ENCODE measurements at regions of chr2 and their contacts with region 1.

Region 1: DNA sequence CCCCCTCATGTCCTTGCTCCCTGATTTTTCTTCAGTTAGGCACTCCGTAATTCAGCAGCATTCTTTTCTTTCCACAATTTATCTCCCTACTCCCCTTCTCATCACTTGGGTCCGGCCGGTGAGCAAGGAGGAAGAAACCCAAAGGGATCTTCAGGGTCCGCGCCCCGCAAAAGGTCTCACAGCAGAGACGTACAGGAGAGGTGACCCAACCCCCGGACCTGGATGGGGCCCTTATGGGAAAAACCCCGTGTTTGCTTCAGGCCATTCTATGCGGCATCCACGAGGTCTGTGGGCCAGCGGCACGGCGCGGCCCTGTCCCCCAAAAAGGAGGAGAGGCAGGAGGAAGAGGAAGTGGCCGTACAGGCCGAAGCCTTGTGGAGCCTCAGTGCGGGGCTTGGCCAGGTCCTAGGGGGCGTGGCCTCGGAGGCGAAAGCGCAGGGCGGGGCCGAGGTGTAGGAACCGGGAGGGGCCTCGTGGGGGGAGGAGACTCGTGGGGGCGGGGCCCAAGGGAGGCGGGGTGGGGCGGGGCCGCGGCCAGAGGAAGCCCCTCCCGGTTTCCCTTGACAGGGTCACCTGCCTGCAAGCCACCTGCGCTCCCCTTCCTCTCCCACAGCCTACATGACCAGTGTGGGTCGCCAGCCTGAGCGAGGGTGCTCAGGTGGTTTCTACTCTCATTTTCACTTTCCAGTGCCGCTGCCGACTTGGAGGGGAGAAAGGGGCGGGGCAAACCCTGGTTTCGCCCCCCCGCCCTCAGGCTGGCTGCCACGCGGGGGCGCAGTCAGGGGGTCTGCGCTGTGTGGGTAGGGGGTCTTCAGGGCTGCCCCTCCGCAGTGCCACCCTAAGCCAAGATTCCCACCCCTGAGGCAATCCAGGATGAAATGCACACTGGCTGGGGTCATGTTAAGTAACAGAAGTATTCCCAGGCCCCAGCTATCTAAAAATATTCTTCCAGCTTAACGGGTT is 156.4 kb upstream of the XPO1 start:
- DNase-seq: peak; percentile 95 to 98 (median 97)
- ATAC-seq: peak; percentile 99 to 100 (median 100)
- H3K4me3 ChIP-seq: peak overlapping the region; percentile 48 to 94 (median 82)
- H3K27ac ChIP-seq: peak overlapping the region; percentile 54 to 91 (median 84)
- H3K4me1 ChIP-seq: peaks cover 0 to 12% (median 5%) of the 10 kb centered on the region in 12 donors
- H3K27me3 ChIP-seq: no peaks in the 10 kb centered on the region
- CTCF ChIP-seq: peak; percentile 20 to 70 (median 50)
- POLR2A ChIP-seq: peak in 1 of 2 donors; percentile 65

Region 2: DNA sequence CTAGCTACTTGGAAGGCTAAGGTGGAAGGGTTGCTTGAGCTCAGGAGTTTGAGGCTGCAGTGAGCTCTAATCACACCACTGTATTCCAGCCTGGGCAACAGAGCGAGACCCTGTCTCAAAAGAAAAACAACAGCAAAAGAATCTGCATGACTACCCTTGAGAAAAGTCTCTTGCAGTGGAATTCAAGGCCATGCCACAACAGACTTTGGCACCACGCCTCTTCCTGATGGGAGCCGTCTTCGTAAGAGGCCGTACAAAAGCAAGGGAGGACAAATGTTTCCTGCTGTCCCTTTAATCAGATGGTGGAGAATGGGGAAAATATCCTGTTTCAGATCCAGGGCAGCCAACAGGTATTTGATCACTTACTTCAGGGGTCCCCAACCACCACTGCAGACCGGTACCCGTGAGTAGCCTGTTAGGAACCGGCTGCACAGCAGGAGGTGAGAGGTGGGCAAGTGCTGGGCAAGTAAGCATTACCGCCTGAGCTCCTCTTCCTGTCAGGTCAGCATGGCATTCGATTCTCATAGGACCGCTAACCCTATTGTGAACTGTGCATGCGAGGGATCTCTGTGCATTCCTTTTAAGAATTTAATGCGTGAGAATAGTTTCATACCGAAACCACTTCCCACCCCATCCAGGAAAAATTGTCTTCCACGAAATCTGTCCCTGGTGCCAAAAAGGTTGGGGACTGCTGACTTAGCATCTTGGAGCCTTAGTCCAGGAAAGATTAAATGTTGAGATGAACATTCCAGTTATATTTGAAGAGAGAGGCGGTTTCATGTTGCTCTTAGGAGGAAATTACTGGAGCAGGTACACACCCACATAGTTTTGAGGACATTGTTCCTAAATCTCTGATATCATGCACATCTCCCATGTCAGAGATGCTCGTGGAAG is 62.1 kb before region 1 on chr2:
- intact Hi-C with region 1: no loop called
- DNase-seq: no peak
- ATAC-seq: no peak
- H3K4me3 ChIP-seq: peak overlapping the region in 4 of 12 donors; percentile 14 to 25 (median 20)
- H3K27ac ChIP-seq: no peak overlapping the region
- H3K4me1 ChIP-seq: no peaks in the 10 kb centered on the region
- H3K27me3 ChIP-seq: no peaks in the 10 kb centered on the region
- CTCF ChIP-seq: no peak
- POLR2A ChIP-seq: no peak

Region 3: DNA sequence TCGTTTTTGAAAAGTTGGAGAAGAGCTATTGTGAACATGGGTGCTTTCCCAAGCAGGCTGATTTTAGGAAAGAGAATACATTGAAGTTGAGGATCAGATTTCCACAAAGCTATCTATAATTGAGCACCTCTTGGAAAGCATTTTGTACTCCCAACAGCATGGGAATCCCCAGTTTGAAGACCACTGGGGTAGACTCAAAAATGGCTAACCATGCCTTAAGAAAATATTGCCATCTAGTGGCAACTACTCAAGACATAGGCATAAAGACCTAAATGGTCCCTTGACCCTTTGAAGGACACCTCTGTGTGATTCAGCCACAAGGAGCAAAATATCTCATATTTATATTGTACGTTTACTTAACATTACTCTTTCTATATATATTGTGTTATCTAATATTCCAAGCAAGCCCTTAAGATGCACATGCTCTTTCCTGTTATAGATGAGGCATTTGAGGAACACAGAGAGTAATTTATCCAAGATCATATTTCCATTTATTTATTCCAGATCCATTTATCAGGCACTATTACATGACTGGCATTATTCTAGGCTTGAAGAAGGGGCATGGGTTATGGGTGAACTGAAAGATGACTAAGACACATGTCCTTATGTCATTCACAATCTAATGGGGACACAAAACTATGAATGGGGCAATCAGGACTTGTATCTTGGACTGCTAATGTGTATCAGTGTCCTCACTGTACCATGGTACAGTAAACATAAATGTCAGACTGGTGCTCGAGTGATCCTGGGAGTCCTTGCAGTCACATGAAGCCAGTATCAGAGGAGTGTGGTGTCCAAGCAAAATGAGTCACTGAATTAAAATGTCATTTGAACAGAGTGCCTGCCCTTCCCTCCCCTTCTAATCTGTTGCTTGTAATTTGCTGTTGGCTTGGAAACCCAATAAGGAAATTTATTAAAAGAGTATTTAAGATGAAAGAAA is 35.5 kb before region 1 on chr2:
- intact Hi-C with region 1: no loop called
- DNase-seq: peak in 3 of 5 donors; percentile 20 to 42 (median 31)
- ATAC-seq: peak; percentile 92 to 94 (median 94)
- H3K4me3 ChIP-seq: no peak overlapping the region
- H3K27ac ChIP-seq: peak overlapping the region; percentile 67 to 93 (median 84)
- H3K4me1 ChIP-seq: peaks cover 0 to 27% (median 16%) of the 10 kb centered on the region in 12 donors
- H3K27me3 ChIP-seq: no peaks in the 10 kb centered on the region
- CTCF ChIP-seq: peak; percentile 30 to 61 (median 43)
- POLR2A ChIP-seq: no peak

Region 4: DNA sequence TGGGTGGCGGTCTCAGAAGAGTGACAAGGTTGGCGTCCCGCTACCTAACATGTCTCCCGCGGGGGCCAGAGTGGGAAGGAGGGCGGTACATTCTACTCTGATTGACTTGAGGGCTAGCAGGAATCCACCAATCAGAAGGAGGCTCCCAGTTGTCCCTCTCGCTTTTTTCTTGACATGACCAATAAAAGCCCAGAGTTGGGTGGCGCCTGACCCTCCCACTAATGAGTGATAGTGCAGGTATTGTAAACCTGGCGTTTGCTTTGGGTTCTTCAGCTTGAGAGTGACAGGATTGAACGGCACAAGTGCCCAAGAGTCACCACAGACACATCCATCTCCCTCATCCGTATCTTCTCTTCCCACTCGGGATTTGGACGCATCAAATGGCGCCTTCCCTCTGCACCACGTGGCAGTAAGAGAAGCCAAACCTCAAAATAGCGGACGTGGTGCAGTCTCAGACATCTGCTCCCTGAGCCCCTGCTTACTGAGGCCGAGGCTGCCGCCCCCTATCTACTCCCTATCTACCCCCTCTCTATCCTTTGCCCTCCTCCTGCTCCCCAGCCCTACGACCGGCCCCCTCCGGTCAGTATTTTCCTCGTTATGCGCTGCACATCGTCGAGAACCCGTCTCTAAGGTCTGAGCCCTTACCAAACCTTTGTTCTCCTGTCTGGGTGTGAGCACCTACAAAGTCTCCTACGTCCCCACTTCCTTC is 160.0 kb after region 1 on chr2:
- intact Hi-C with region 1: loop called in 1 of 10 experiments (anchors 5 kb)
- DNase-seq: peak; percentile 84 to 91 (median 89)
- ATAC-seq: peak; percentile 94 to 97 (median 96)
- H3K4me3 ChIP-seq: peak overlapping the region; percentile 55 to 88 (median 71)
- H3K27ac ChIP-seq: peak overlapping the region in 11 of 12 donors; percentile 62 to 87 (median 79)
- H3K4me1 ChIP-seq: peaks cover 0 to 17% (median 7%) of the 10 kb centered on the region in 12 donors
- H3K27me3 ChIP-seq: no peaks in the 10 kb centered on the region
- CTCF ChIP-seq: no peak
- POLR2A ChIP-seq: peak in 1 of 2 donors; percentile 15